Activated CD8-positive, alpha-beta memory T cell treated with anti-CD3 and anti-CD28 coated beads, Interleukin-2, amount 10 ng/mL, durations not matched to agents 7 days and 5 days (primary cell): ENCODE measurements at regions of chr5 and their contacts with region 1.

Region 1: DNA sequence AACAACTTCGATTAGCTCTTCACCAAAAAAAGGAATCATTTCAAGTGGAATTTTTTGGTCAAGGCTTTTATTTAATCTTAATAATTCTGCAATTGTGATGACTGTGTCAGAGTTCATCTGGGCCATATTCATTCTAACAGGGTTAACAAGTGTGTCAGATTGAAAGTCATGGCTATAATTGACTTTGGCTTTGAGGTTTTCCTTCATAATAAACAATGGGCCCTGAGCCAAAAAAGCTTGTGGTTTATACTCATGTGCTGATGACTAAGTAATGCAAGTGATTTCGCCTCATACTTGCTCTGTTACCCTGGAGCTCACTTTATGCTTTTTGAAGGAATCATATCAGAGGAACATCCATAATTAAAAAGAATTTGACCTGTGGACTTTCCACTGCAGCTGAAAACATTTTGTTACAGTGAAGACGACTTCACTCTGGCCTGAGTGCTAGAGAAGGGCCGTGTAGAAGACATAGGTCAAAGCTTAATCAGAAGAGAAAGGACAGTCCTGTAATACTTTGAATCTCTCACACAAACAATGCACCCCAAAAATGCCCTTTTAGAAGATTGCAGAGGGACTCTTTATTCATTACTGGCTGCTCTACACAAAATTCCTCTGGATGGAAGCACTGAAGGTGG is 101.7 kb downstream of the GDNF start:
- DNase-seq: peak; percentile 55
- ATAC-seq: peak; percentile 92
- H3K4me3 Mint-ChIP-seq: no peak overlapping the region
- H3K27ac Mint-ChIP-seq: no peak overlapping the region
- H3K4me1 Mint-ChIP-seq: peaks cover 31% of the 10 kb centered on the region
- H3K27me3 Mint-ChIP-seq: peaks cover 13% of the 10 kb centered on the region

Region 2: DNA sequence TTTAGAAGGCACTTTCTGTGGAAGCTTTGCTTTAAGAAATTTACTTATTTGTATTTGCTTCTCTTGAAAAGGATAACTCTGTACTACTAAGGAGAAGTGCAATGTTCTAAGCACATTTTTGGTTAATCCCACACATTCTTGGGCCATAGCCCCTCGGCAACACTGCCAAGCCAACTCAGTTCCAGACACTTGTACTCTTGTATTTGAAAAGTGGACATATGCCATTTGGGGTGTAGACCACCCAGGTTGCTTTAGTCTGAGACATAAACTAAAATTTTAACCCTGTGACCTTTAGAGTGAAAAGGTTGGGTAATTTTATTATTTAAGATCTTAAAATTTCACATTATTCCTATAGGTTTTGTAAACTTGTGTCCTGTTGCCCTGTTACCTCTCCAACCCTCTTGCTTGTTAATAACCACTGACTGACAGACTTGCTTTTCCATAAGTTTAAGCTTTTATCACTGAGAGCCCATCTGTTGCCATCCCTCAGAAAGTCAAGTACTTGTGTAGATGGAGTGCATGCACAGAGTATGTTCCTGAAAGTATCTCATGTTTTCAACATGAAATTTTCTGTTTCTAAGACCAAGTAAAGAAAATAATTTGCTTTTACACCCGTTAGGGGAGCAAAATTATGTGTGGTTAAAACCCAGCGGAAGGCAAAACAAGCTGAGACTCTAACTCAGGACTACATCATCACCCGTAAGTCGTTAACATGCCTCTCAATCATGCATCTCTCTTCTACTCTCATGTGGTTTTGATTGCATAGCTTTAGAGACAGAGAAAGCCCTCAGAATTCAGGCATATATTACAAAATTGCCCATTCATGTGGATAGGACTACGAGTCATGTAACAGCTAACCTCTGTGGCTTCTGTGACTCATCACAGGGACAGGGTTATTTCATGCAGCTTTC is 15.7 kb before region 1 on chr5:
- CTCF ChIA-PET with region 1: interaction called, 13 read pairs
- DNase-seq: peak; percentile 79
- ATAC-seq: peak; percentile 89
- H3K4me3 Mint-ChIP-seq: peak overlapping the region; percentile 56
- H3K27ac Mint-ChIP-seq: peak overlapping the region; percentile 85
- H3K4me1 Mint-ChIP-seq: peaks cover 35% of the 10 kb centered on the region
- H3K27me3 Mint-ChIP-seq: peaks cover 6% of the 10 kb centered on the region